Activated CD8-positive, alpha-beta T cell treated with anti-CD3 and anti-CD28 coated beads for 36 hours (primary cell): ENCODE measurements at regions of chr5 and their contacts with region 1.

Region 1: DNA sequence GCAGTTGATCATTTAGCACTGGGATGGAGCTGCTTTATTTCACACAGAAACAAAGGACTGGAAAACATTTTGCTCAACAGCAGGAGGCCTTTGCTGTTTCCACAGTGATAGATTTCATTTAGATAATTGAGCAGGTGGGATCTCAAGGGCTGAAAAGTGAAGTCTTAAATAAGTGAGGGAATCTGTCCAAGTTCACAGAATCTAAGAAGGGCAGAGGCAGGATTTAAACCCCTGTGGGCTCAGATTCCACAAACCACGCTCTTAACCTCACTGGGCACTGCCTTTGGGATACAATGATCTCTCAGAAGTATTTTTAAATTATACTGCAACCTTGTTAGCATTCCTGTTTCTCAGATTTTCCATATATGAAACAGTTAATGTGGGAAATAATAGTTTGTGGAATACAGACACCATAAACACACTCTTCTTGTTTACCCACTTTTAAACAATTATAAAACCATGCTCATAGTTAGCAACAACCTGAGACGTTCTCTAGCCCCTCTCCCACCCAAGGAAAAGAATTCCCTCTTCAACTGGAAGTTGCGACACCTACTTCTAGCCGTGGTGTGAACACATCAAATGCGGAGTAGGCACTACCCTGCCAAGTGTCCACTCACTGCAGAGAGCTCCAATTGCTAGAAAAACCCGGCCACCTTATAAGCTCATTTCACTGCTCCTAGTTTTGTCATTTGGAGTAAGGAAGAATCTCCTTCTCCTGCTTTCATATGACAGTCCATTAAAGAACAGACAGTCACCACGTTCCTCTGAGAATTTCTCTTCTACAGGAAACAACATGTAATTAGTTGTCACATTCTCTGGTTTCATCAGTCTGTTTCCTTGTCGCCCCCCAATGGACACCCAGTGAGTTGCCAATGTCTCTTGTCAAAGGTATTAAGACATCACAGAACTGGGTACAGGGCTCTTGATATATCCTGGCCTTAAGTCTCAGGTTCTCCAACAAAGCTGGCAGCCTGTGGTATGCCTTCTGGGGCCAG is 47.4 kb downstream of the PRLR start:
- DNase-seq: peak; percentile 62
- ATAC-seq: peak; percentile 30
- H3K4me3 Mint-ChIP-seq: no peak overlapping the region
- H3K27ac Mint-ChIP-seq: no peak overlapping the region
- H3K4me1 Mint-ChIP-seq: no peaks in the 10 kb centered on the region
- H3K27me3 Mint-ChIP-seq: peaks cover 5% of the 10 kb centered on the region
- CTCF ChIP-seq: peak; percentile 63

Region 2: GRCh38 chr5:35089334-35090314 is 93.2 kb before region 1 on chr5:
- CTCF ChIA-PET with region 1: interaction called, 6 read pairs
- POLR2A ChIA-PET with region 1: no interaction called
- intact Hi-C with region 1: loop called (anchors 5 kb)
- DNase-seq: peak; percentile 68
- ATAC-seq: peak; percentile 53
- H3K4me3 Mint-ChIP-seq: no peak overlapping the region
- H3K27ac Mint-ChIP-seq: no peak overlapping the region
- H3K4me1 Mint-ChIP-seq: no peaks in the 10 kb centered on the region
- H3K27me3 Mint-ChIP-seq: peaks cover 3% of the 10 kb centered on the region
- CTCF ChIP-seq: peak; percentile 61